ENCODE measurements at regions of chr10 and their contacts with region 1.

Region 1: DNA sequence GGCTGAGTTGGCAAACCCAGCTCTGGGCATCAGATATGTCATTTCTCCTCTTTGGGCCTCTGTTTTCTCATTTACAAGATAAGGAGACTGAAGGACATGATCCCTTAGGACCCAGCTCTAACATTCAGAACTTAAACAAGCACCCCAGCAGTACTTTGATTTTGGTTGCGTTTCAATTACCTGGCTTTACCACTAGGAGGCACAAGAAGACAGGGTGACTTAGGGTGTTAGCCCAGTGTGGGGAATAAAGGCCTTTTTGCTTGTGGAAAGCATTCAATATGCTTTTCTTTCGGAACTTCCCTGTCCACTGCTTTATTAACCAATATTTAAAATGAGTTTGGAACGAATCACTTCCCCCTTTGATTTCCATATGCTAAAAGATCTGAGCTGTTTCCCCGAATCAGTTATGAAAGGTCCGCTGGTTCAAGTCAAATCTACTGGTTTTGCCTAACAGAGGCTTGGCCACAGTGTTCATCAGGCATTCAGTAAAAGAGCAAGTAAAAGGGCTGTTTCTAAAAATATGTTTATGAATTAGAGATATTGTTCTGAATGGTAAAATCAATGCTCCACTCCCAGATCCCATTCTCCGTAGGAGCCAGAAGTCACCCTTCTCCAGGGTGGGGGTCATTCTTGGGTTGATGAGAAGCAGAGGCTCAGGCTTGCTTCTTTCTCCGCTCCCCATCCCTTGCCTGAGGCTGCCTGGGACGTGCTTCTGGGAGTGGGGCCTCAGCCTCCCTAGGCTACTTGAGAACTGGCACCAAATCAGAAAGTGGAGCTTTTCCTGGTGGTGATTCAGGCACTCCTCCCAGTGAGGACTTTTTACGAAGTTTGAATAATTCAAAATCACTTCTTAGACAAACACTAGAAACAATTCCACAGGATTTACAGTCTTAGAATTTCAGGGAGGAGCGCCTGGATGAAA is 105.5 kb downstream of the MYOF start:
- DNase-seq: peak; percentile 48
- H3K4me3 Mint-ChIP-seq: no peak overlapping the region
- H3K27ac Mint-ChIP-seq: peak overlapping the region; percentile 46
- H3K4me1 Mint-ChIP-seq: peaks cover 20% of the 10 kb centered on the region
- H3K27me3 Mint-ChIP-seq: no peaks in the 10 kb centered on the region

Region 2: DNA sequence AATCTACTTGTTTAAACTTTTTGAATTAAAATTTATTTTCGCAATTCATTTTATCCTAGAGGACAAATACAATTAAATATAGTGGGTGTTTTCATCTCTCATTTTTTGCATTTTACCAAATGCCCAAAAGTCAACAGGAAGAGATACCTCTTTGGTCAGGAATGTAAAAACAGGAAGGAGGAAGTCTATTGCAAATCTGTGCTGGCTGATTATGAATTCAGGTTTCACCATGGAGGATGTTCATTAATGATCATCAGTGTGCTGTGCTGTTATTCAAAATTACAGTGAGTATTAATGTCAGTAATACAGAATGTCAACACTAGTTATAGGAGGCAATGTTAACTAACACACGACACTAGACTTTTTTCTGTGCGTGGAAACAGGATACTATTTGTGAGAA is 503.6 kb before region 1 on chr10:
- CTCF ChIA-PET with region 1: no interaction called
- DNase-seq: no peak
- H3K4me3 Mint-ChIP-seq: no peak overlapping the region
- H3K27ac Mint-ChIP-seq: no peak overlapping the region
- H3K4me1 Mint-ChIP-seq: peaks cover 26% of the 10 kb centered on the region
- H3K27me3 Mint-ChIP-seq: no peaks in the 10 kb centered on the region

Region 3: DNA sequence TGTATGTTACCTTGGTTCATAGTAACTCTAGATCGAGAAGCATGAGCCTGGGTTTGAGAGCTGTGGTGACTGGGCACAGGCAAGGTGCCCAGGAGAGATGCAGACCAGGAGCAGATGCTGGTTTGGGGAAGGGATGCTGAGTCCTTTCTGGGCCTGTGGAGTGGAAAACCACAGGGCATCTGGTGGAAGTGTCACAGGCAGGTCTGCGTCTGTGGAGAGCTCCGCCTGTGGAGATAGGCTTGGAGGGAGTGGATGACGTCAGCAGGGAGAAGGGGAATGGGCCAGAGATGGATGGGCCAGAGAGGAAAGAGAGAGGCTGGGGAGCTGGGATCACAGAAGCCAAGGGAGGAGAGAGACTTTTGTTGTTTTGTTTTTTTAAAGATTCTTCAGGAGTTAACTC is 288.2 kb before region 1 on chr10:
- CTCF ChIA-PET with region 1: no interaction called
- DNase-seq: no peak
- H3K4me3 Mint-ChIP-seq: no peak overlapping the region
- H3K27ac Mint-ChIP-seq: no peak overlapping the region
- H3K4me1 Mint-ChIP-seq: no peaks in the 10 kb centered on the region
- H3K27me3 Mint-ChIP-seq: peaks cover 16% of the 10 kb centered on the region

Region 4: GRCh38 chr10:93235686-93236085 is 140.9 kb before region 1 on chr10:
- CTCF ChIA-PET with region 1: no interaction called
- DNase-seq: no peak
- H3K4me3 Mint-ChIP-seq: no peak overlapping the region
- H3K27ac Mint-ChIP-seq: no peak overlapping the region
- H3K4me1 Mint-ChIP-seq: no peaks in the 10 kb centered on the region
- H3K27me3 Mint-ChIP-seq: peaks cover 21% of the 10 kb centered on the region

Region 5: DNA sequence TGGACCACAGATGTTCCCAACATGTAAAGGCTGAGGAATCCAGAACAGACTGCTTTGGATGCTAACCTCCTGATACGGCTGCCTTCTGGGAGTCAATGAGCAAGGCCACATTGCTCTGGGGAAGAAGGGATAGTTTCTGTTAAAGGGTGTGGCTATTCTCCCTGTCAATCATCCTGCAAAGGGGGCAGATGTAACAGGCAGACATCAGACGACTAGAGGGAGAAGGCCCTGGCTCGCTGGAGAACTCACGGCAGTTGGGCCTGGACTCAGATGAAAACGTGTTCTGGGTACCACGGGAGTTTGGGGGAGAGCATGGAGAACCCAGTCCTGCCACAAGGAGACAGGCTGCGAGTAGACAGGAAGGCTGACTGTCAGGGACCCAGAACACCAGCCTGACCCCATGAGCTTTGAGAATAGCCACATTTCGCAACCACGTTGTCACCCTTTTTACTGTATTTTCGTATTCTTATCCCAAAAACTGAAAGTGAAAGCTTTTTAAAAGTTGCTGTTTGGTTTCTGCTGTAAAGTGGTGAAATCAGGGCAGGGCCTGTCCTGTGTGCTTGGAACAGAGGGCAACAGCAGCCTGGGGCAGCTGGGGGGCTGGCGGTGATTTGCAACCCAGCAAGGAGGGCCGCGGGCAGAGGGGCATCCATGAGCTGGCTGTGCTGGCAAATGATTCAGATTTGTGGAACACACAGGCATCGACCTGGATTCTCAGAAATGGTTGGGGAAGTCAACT is 10.2 kb after region 1 on chr10:
- CTCF ChIA-PET with region 1: interaction called, 34 read pairs
- DNase-seq: peak; percentile 43
- H3K4me3 Mint-ChIP-seq: no peak overlapping the region
- H3K27ac Mint-ChIP-seq: peak overlapping the region; percentile 91
- H3K4me1 Mint-ChIP-seq: peaks cover 25% of the 10 kb centered on the region
- H3K27me3 Mint-ChIP-seq: no peaks in the 10 kb centered on the region

Region 6: GRCh38 chr10:93463678-93464476 is 87.2 kb after region 1 on chr10:
- CTCF ChIA-PET with region 1: interaction called, 12 read pairs
- DNase-seq: no peak
- H3K4me3 Mint-ChIP-seq: no peak overlapping the region
- H3K27ac Mint-ChIP-seq: no peak overlapping the region
- H3K4me1 Mint-ChIP-seq: peaks cover 13% of the 10 kb centered on the region
- H3K27me3 Mint-ChIP-seq: no peaks in the 10 kb centered on the region

Region 7: DNA sequence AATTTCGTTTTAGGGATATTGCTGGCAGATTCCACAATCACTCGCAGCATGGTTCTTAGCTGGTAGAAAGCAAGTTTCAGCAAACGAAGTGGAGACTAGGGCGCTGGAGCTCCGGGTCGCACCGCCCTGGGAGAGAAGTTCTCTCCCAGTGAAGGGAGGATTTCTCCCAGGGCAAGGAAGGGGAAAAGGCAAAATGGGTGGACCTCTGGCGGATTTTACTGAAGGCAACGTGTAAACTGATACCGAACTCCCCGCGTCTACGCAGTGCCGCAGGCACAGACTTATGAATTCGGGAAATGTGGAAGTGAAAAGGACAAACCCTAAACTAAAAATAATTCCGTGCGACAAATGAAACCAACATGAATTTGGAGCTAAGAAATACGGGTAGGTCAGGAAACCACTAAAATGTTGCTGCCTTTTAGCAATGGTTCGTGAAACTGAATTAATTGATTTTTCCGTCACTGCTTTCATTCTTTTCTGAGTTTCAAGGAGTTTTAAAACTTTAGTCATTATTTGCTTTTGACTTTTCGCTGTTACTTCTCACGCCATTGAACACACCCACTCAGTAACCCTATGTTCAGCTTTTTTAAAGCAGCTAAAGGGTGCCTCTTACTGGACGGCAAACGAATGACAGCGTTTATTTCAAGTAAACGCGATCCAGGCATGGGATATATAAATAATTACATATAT is 105.7 kb after region 1 on chr10 and contains the start of gene MYOF:
- CTCF ChIA-PET with region 1: interaction called, 533 read pairs
- DNase-seq: peak; percentile 68
- H3K4me3 Mint-ChIP-seq: peak within 1 kb of the TSS; percentile 80
- H3K27ac Mint-ChIP-seq: no peak within 1 kb of the TSS
- H3K4me1 Mint-ChIP-seq: peaks cover 14% of the 10 kb centered on the region
- H3K27me3 Mint-ChIP-seq: peaks cover 23% of the 10 kb centered on the region

Region 8: DNA sequence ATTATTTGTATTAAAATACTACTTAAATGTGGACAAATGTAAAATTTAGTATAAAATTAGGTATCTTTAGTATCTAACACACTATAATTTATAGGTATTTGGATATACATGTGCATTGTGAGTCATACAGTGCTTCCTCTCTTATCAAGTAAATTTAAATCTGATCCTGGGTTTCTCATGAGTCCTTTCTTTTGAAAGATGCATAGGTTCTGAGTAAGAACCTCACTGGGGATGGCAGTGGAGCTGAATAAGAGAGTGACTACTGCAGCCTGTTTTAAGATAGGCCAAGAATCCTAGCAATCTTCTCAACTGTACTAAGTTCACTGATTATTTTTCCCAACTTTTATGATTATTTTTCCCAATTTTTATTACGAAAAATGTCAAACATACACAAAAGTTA is 135.9 kb after region 1 on chr10:
- CTCF ChIA-PET with region 1: interaction called, 77 read pairs
- DNase-seq: no peak
- H3K4me3 Mint-ChIP-seq: no peak overlapping the region
- H3K27ac Mint-ChIP-seq: no peak overlapping the region
- H3K4me1 Mint-ChIP-seq: peaks cover 2% of the 10 kb centered on the region
- H3K27me3 Mint-ChIP-seq: no peaks in the 10 kb centered on the region

Measured in activated naive CD4-positive, alpha-beta T cell treated with anti-CD3 and anti-CD28 coated beads, Interleukin-2, amount 10 ng/mL, durations not matched to agents 7 days and 5 days (primary cell).